ENCODE measurements at regions of chr6 and their contacts with region 1.

Region 1: DNA sequence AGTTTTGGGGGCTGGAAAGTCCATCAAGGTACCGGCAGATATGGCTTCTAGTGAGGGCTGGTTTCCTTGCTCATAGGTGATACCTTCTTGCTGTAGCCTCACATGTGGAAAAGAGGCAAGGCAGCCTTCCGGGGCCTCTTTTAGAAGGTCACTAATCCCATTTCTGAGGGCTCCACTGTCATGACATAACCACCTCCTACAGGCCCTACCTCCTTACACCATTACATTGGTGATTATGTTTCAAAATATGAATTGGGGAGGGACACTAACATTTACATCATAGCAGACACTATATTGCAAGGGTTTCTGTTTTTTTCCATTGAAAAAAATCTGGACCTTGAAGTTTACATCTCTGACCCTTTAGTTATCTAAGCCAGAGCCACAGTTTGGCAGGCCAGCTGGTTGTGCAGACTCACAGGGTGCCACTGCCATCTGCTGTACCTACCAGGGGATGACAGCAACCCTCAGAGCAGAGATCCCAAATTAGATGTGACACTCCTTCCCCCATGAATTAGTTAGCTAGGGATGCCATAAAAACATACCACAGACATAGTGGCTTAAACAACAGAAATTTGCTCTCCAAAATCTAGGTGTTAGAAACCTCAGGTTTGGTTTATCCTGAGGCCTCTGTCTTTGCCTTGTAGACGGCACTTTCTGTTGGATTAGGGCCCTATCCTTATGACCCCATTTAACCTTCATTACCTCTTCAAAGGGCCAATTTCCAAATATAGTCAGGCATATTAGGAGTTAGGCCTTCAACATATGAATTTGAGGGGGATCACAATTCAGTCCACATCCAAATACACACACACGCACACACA is 166.4 kb upstream of the RNF217 start:
- DNase-seq: no peak
- H3K4me3 ChIP-seq: no peak overlapping the region
- H3K27ac ChIP-seq: no peak overlapping the region
- H3K4me1 ChIP-seq: no peaks in the 10 kb centered on the region
- H3K27me3 ChIP-seq: peaks cover 2 to 8% of the 10 kb centered on the region in 2 experiments
- CTCF ChIP-seq: peak; percentile 19 to 31
- POLR2A ChIP-seq: no peak

Region 2: DNA sequence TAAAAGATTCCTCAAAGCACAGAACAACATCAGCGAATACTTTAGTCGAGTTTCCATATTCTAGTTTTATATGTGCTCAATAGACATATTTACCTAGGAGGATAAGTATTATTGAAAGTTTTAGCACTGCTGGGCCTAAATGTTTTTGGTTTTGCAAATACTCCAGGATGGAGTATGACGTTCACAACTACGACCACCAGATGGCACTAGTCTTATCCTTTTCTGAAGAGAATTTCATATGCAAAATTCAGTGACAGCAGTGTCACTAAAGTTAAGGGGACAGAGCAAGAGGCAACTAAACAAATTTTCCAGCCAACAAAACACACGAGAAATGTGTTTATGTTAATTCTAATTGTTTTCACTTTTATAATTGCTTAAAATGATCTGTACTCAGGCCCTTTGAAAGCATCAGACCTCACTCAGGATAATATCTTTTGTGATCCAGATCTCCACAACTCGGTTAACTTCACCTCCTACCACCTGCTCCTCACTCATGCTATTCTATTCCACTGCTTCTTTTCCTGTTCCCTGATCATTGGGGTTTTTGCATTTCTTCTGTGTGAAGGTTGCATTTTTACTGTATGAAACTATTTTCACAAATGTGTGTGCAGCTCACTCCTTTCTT is 1379.9 kb before region 1 on chr6:
- CTCF ChIA-PET with region 1: no interaction called
- POLR2A ChIA-PET with region 1: no interaction called
- dilution Hi-C with region 1: no loop called
- intact Hi-C with region 1: loop called (anchors 10 kb)
- DNase-seq: peak; percentile 56
- H3K4me3 ChIP-seq: no peak overlapping the region
- H3K27ac ChIP-seq: no peak overlapping the region
- H3K4me1 ChIP-seq: no peaks in the 10 kb centered on the region
- H3K27me3 ChIP-seq: peaks cover 2 to 6% of the 10 kb centered on the region in 2 experiments
- CTCF ChIP-seq: peak; percentile 50 to 54
- POLR2A ChIP-seq: no peak

Region 3: GRCh38 chr6:123777563-123777962 is 1018.3 kb before region 1 on chr6:
- CTCF ChIA-PET with region 1: interaction called, 9 read pairs
- POLR2A ChIA-PET with region 1: no interaction called
- dilution Hi-C with region 1: no loop called
- intact Hi-C with region 1: loop called (anchors 2 kb)
- DNase-seq: peak; percentile 46
- H3K4me3 ChIP-seq: no peak overlapping the region
- H3K27ac ChIP-seq: no peak overlapping the region
- H3K4me1 ChIP-seq: no peaks in the 10 kb centered on the region
- H3K27me3 ChIP-seq: no peaks in the 10 kb centered on the region
- CTCF ChIP-seq: peak in 1 of 2 donors; percentile 14
- POLR2A ChIP-seq: no peak

Region 4: DNA sequence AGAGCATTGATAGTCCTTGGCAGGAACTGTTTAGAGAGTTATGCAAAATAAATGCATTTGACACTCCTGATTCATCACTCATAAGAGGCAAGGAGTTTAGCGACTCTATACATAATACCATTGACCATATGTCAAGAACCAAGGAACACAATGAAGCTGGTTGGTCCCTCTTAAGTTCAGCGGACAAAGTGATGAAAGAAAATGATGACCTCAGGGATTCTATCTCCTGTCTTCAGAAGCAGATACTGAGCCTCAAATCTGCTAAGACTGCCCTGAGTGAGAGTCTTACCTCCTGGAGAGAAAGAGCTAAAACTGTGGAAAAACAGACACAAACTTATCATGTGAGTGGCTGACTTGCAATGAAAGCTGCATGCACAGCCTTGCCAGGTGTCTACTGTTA is 1001.7 kb before region 1 on chr6:
- CTCF ChIA-PET with region 1: interaction called, 3 read pairs
- POLR2A ChIA-PET with region 1: no interaction called
- dilution Hi-C with region 1: no loop called
- intact Hi-C with region 1: loop called (anchors 5 kb)
- DNase-seq: no peak
- H3K4me3 ChIP-seq: no peak overlapping the region
- H3K27ac ChIP-seq: no peak overlapping the region
- H3K4me1 ChIP-seq: no peaks in the 10 kb centered on the region
- H3K27me3 ChIP-seq: peaks cover 0 to under 1% of the 10 kb centered on the region in 2 experiments
- CTCF ChIP-seq: no peak
- POLR2A ChIP-seq: no peak

Region 5: GRCh38 chr6:124633660-124634059 is 162.2 kb before region 1 on chr6:
- CTCF ChIA-PET with region 1: no interaction called
- POLR2A ChIA-PET with region 1: no interaction called
- dilution Hi-C with region 1: no loop called
- intact Hi-C with region 1: no loop called
- DNase-seq: no peak
- H3K4me3 ChIP-seq: no peak overlapping the region
- H3K27ac ChIP-seq: no peak overlapping the region
- H3K4me1 ChIP-seq: no peaks in the 10 kb centered on the region
- H3K27me3 ChIP-seq: no peaks in the 10 kb centered on the region
- CTCF ChIP-seq: no peak
- POLR2A ChIP-seq: no peak

Measured in endothelial cell of umbilical vein (primary cell).